Heart right ventricle (tissue), 16 donors: ENCODE measurements at regions of chr7 and their contacts with region 1.

Region 1: GRCh38 chr7:100119062-100119700 is at the starts of genes CNPY4 and TAF6:
- DNase-seq: peak; percentile 96 to 97
- ATAC-seq: peak; percentile 91 to 98 (median 95)
- H3K4me3 ChIP-seq: peak within 1 kb of the TSS; percentile 51 to 86 (median 74)
- H3K27ac ChIP-seq: peak within 1 kb of the TSS; percentile 83 to 94 (median 89)
- H3K4me1 ChIP-seq: peaks cover 5 to 21% (median 17%) of the 10 kb centered on the region in 9 donors
- H3K27me3 ChIP-seq: no peaks in the 10 kb centered on the region
- CTCF ChIP-seq: peak in 1 of 9 donors; percentile 3
- total RNA-seq, gene CNPY4: 4.9 to 10.8 (median 6.6) TPM
- total RNA-seq, gene TAF6: 28.0 to 43.3 (median 31.0) TPM

Region 2: GRCh38 chr7:100101016-100101862 is 17.9 kb before region 1 on chr7 and contains the starts of genes AP4M1 and MCM7:
- intact Hi-C with region 1: loop called in 3 of 10 experiments (anchors 1 to 2 kb)
- DNase-seq: peak; percentile 99
- ATAC-seq: peak; percentile 94 to 97 (median 96)
- H3K4me3 ChIP-seq: peak within 1 kb of the TSS; percentile 57 to 89 (median 78)
- H3K27ac ChIP-seq: peak within 1 kb of the TSS; percentile 81 to 97 (median 93)
- H3K4me1 ChIP-seq: peaks cover 3 to 32% (median 26%) of the 10 kb centered on the region in 9 donors
- H3K27me3 ChIP-seq: no peaks in the 10 kb centered on the region
- CTCF ChIP-seq: no peak
- total RNA-seq, gene AP4M1: 8.4 to 14.4 (median 11.0) TPM
- total RNA-seq, gene MCM7: 11.6 to 30.4 (median 15.5) TPM